ENCODE measurements at regions of chr11 and their contacts with region 1.

Region 1: GRCh38 chr11:74611369-74611861 is 19.0 kb downstream of the POLD3 start:
- DNase-seq: no peak
- H3K4me3 ChIP-seq: no peak overlapping the region
- H3K27ac ChIP-seq: peak overlapping the region in 2 of 5 donors; percentile 20 to 35
- H3K4me1 ChIP-seq: peaks cover 0 to 6% of the 10 kb centered on the region in 2 donors
- H3K27me3 ChIP-seq: no peaks in the 10 kb centered on the region
- CTCF ChIP-seq: peak in 5 of 6 experiments; percentile 40 to 57 (median 50)
- POLR2A ChIP-seq: no peak

Region 2: DNA sequence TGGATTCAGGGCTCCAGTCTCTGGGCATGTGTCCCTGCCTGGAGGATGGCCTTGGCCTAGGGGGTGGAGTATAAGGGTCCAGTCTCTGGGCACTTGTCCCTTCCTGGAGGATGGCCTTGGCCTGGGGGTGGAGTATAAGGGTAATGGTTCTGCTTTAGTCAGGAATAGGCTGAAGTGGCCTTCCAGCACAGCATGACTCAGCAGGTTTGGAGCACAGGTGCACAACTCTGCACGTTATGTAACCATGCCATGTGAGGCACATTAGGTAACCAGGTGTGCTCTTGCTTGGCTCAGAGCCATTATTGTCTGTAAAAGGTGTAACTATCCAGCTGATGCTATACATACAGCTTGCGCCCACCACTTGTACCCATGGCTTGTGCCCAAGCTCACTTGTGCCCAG is 67.4 kb before region 1 on chr11:
- intact Hi-C with region 1: no loop called
- DNase-seq: no peak
- H3K4me3 ChIP-seq: no peak overlapping the region
- H3K27ac ChIP-seq: no peak overlapping the region
- H3K4me1 ChIP-seq: no peaks in the 10 kb centered on the region
- H3K27me3 ChIP-seq: peaks cover 6% of the 10 kb centered on the region
- CTCF ChIP-seq: no peak
- POLR2A ChIP-seq: no peak

Region 3: DNA sequence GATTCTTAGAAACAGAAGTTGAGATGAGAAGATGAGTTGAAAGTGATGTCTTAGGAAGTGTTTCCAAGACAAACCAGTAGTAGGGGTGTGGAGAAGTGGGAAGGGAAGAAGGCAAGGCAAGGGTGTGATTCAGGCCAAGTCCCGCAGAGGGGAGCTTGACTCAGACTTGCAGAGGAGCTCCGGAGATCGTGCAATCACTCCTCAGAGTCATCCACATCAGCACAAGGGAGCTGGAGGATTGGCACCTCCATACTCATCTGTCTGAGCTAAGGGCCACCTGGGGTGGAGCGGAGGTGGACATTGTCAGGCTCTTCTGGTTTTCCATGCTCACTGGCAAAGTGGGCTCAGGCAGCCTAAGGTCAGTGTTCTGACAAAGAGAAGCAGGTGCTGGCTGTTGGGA is 75.4 kb after region 1 on chr11:
- intact Hi-C with region 1: no loop called
- DNase-seq: no peak
- H3K4me3 ChIP-seq: no peak overlapping the region
- H3K27ac ChIP-seq: no peak overlapping the region
- H3K4me1 ChIP-seq: peaks cover 0 to 6% of the 10 kb centered on the region in 2 donors
- H3K27me3 ChIP-seq: no peaks in the 10 kb centered on the region
- CTCF ChIP-seq: no peak
- POLR2A ChIP-seq: no peak

Region 4: DNA sequence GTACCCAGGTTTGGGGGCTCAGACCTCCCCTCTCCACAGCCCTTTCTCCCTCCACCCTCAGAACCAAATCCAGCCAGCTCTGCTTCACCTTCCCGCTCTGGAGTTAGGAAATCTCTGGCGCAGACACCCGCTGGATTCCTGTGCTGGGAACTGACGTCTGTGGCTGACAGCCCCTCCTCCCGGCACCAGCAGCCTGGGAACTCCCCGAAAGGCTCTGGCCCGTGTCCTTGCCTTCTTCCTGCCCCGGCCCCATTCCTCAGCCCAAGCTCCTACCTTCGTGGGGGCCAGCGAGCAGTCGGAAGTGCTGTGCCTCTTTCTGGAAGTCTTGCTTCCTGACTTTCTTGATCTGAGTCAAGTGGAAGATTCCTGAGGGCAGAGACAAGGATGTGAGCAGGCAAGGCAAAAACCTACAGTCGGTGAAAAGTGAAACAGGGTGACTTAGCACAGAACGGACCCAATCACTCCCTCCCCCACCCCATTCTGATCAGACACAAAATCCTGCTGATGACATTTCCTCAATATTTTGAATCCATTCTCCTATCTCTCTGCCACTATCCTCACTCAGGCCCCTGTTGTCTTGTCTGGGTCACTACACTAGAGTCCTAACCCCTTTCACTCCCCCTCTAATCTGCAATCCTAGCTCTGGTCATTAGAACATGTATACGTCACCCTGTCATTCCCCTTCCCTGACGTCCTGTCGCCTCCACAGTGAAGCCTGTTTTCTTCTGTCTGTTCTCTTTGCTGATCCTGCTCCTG is 85.7 kb after region 1 on chr11:
- intact Hi-C with region 1: no loop called
- DNase-seq: peak; percentile 43 to 90 (median 79)
- H3K4me3 ChIP-seq: no peak overlapping the region
- H3K27ac ChIP-seq: peak overlapping the region; percentile 37 to 87 (median 69)
- H3K4me1 ChIP-seq: peaks cover 0 to 14% of the 10 kb centered on the region in 2 donors
- H3K27me3 ChIP-seq: no peaks in the 10 kb centered on the region
- CTCF ChIP-seq: no peak
- POLR2A ChIP-seq: no peak

Region 5: DNA sequence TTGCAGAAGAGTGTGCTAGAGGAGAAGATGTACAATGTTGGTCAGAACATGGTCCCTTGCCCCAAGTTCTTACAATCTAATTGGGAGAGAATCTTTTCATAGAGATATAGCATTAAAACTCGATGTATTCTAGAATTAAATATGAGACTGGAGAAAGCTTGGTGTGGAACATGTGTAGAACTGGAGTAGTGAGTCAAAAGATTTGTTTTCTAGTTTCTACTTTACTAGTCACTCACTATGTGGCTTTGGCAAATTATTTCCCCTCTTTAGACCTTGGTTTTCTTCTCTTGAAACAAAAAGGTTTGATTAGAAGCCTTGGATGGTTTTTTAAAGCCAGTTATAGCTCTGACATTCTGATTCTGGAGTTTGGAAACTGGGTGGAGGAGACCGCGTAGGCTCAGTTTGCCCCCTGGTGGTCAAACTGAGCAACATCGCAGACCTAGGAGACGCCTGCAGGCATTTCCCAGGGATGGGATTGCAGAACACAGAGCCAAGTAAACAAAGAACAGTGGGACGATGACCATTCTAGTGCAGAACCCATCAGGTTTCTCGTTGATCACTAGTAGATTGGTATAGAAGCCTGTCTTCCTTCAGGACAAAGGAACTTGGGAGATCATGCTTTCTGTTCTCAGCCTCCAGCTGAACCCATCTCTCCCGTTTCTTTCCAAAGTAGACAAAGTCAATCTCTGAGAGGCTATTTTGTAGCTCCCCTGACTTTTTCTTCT is 128.3 kb after region 1 on chr11:
- intact Hi-C with region 1: loop called in 1 of 2 experiments (anchors 10 kb)
- DNase-seq: peak; percentile 37 to 78 (median 57)
- H3K4me3 ChIP-seq: no peak overlapping the region
- H3K27ac ChIP-seq: no peak overlapping the region
- H3K4me1 ChIP-seq: no peaks in the 10 kb centered on the region
- H3K27me3 ChIP-seq: peaks cover 4% of the 10 kb centered on the region
- CTCF ChIP-seq: peak; percentile 68 to 92 (median 81)
- POLR2A ChIP-seq: no peak

Measured in adrenal gland (tissue), 19 donors.